ENCODE measurements at regions of chr3 and their contacts with region 1.

Region 1: GRCh38 chr3:126083913-126084767 is at the start of gene SLC41A3:
- DNase-seq: peak; percentile 90
- H3K4me3 Mint-ChIP-seq: peak within 1 kb of the TSS; percentile 85
- H3K27ac Mint-ChIP-seq: peak within 1 kb of the TSS; percentile 67
- H3K4me1 Mint-ChIP-seq: peaks cover 19% of the 10 kb centered on the region
- H3K27me3 Mint-ChIP-seq: no peaks in the 10 kb centered on the region
- total RNA-seq, gene SLC41A3: 26.3 to 27.3 TPM

Region 2: GRCh38 chr3:125990253-125990970 is 93.7 kb before region 1 on chr3:
- CTCF ChIA-PET with region 1: no interaction called
- POLR2A ChIA-PET with region 1: interaction called, 4 read pairs
- intact Hi-C with region 1: loop called (anchors 2 kb)
- DNase-seq: peak; percentile 74
- H3K4me3 Mint-ChIP-seq: peak overlapping the region; percentile 92
- H3K27ac Mint-ChIP-seq: peak overlapping the region; percentile 87
- H3K4me1 Mint-ChIP-seq: peaks cover 5% of the 10 kb centered on the region
- H3K27me3 Mint-ChIP-seq: peaks cover 4% of the 10 kb centered on the region

Region 3: DNA sequence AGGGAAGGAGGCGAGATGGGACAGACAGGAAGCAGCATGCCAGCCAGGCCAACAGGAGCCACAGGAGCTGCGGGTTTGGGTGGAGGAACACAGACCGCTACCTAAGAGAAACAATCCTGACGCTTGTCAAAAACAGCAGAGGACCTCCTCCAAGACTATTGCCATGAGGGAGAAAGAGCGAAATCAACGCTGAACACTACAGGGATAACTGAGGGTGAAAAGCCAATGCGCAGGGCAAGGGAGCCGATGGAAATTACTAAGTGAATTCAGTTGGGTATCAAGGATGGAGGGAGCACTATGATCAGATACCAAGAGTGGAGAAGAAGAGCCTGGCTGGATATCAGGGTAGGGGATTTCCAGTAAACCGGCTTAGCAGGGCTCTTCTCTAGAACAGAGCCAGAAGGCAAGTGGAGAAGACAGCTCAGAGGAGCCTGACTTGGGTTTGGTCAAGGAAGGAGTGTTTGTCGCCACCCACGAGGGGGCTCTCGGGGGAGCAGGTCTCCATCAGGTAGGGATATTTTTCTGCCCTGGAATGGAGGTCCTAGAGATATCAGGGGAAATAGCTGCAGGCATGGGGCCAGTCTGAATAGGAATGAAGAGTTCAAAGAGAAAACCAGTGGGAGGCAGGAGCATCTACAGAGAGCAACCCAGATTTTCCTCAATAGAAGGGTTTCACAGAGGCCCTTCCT is 48.6 kb before region 1 on chr3:
- CTCF ChIA-PET with region 1: no interaction called
- POLR2A ChIA-PET with region 1: no interaction called
- intact Hi-C with region 1: no loop called
- DNase-seq: no peak
- H3K4me3 Mint-ChIP-seq: no peak overlapping the region
- H3K27ac Mint-ChIP-seq: no peak overlapping the region
- H3K4me1 Mint-ChIP-seq: peaks cover 4% of the 10 kb centered on the region
- H3K27me3 Mint-ChIP-seq: no peaks in the 10 kb centered on the region